ENCODE measurements at regions of chr17 and their contacts with region 1.

Region 1: DNA sequence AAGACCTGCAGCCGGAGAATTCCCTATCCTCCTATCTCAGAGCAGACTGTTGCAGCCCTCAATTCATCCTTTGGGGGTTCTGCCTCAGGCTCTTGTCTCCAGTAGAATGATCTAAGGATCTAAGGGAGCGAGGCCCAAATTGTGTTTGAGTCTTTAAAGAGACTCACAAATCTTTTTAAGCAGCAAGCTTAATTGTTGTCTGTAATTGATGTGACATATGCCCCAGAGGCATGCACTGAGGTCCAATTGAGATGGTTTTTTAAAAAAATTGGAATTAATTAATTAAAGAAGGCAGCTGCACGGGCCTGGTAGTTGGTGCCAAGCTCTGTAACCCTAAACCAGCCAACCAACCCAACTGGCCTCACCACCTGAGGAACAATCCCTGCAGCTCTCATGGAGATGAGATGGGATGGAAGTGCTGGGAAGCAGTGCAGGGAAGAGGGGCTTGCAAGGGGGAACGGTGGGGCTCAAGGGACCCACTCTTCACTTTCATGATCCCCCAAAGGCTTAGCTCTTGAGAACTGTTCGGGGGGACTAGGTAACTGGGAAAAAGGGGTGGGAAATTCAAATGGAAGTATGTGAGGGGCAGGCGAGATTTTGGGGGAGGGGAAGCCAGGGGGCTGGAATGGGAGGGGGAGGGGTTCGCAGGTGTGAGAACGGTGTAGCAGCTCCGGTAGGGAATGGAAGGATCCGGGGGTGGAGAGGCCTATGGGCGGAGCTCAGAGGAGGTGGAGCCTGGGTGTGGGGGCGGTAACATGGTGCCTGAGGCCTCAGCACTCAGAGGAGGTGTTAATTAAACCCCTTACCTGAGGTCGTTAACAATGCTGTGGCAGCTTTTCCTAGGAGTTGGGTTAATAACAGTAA is 9.2 kb upstream of the ZNF652 start:
- DNase-seq: peak in 1 of 2 experiments; percentile 55
- H3K4me3 ChIP-seq: no peak overlapping the region
- H3K4me3 Mint-ChIP-seq: no peak overlapping the region
- H3K27ac Mint-ChIP-seq: no peak overlapping the region
- H3K4me1 ChIP-seq: peaks cover 9% of the 10 kb centered on the region
- H3K4me1 Mint-ChIP-seq: peaks cover 6% of the 10 kb centered on the region
- H3K27me3 ChIP-seq: no peaks in the 10 kb centered on the region
- H3K27me3 Mint-ChIP-seq: no peaks in the 10 kb centered on the region
- CTCF ChIP-seq: no peak

Region 2: GRCh38 chr17:49277638-49278037 is 93.6 kb before region 1 on chr17:
- CTCF ChIA-PET with region 1: no interaction called
- POLR2A ChIA-PET with region 1: interaction called, 10 read pairs
- intact Hi-C with region 1: no loop called
- DNase-seq: peak in 1 of 2 experiments; percentile 30
- H3K4me3 ChIP-seq: no peak overlapping the region
- H3K4me3 Mint-ChIP-seq: no peak overlapping the region
- H3K27ac Mint-ChIP-seq: no peak overlapping the region
- H3K4me1 ChIP-seq: no peaks in the 10 kb centered on the region
- H3K4me1 Mint-ChIP-seq: no peaks in the 10 kb centered on the region
- H3K27me3 ChIP-seq: no peaks in the 10 kb centered on the region
- H3K27me3 Mint-ChIP-seq: no peaks in the 10 kb centered on the region
- CTCF ChIP-seq: no peak

Region 3: DNA sequence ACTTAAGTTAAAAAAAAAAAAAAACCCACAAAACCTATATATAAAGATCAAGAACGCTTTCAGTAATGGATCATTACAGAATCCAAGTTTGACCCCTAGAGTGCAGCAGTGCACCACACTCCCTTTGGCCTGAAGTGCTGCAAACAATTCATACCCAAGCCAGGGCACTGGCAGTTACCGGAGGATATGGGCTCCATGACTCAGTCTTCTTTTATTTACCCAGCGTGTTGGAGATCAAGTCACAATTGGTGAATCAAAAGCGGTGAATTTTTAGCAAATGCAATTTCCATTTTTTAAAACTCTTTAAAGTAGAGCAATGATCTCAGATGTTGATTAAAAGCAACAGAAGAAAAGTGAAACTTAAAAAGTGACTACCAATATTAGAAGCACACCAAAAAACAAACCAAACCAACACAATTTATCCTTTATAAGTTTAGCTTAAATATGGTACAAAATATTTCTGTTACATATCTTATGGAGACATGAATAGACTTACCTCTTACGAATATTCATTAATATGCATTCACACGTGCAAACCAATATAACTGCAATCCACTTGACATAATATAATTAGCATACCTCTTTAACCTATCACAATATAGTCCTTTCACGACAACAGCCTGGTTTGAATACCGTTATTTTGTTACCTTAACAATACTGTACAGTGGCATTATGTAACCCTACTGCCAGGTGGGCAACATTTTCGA is 55.5 kb before region 1 on chr17:
- CTCF ChIA-PET with region 1: interaction called, 11 read pairs
- POLR2A ChIA-PET with region 1: no interaction called
- intact Hi-C with region 1: no loop called
- DNase-seq: peak; percentile 82 to 87
- H3K4me3 ChIP-seq: no peak overlapping the region
- H3K4me3 Mint-ChIP-seq: no peak overlapping the region
- H3K27ac Mint-ChIP-seq: no peak overlapping the region
- H3K4me1 ChIP-seq: no peaks in the 10 kb centered on the region; the same call in 1 of the 2 replicates
- H3K4me1 Mint-ChIP-seq: no peaks in the 10 kb centered on the region
- H3K27me3 ChIP-seq: no peaks in the 10 kb centered on the region
- H3K27me3 Mint-ChIP-seq: no peaks in the 10 kb centered on the region
- CTCF ChIP-seq: peak; percentile 97 to 99

Region 4: GRCh38 chr17:49390548-49391324 is 19.5 kb after region 1 on chr17:
- CTCF ChIA-PET with region 1: interaction called, 3 read pairs
- POLR2A ChIA-PET with region 1: no interaction called
- intact Hi-C with region 1: loop called (anchors 1 kb)
- DNase-seq: no peak
- H3K4me3 ChIP-seq: no peak overlapping the region
- H3K4me3 Mint-ChIP-seq: no peak overlapping the region
- H3K27ac Mint-ChIP-seq: no peak overlapping the region
- H3K4me1 ChIP-seq: peaks cover 9% of the 10 kb centered on the region; the same call in 1 of the 2 replicates
- H3K4me1 Mint-ChIP-seq: no peaks in the 10 kb centered on the region
- H3K27me3 ChIP-seq: no peaks in the 10 kb centered on the region
- H3K27me3 Mint-ChIP-seq: no peaks in the 10 kb centered on the region
- CTCF ChIP-seq: no peak

Region 5: GRCh38 chr17:49548506-49549310 is 177.5 kb after region 1 on chr17:
- CTCF ChIA-PET with region 1: no interaction called
- POLR2A ChIA-PET with region 1: no interaction called
- intact Hi-C with region 1: no loop called
- DNase-seq: peak; percentile 75 to 77
- H3K4me3 ChIP-seq: no peak overlapping the region
- H3K4me3 Mint-ChIP-seq: no peak overlapping the region
- H3K27ac Mint-ChIP-seq: no peak overlapping the region
- H3K4me1 ChIP-seq: peaks cover 5% of the 10 kb centered on the region; the same call in 1 of the 2 replicates
- H3K4me1 Mint-ChIP-seq: peaks cover 9% of the 10 kb centered on the region
- H3K27me3 ChIP-seq: no peaks in the 10 kb centered on the region
- H3K27me3 Mint-ChIP-seq: no peaks in the 10 kb centered on the region
- CTCF ChIP-seq: peak; percentile 82 to 93

Measured in Caco-2 (cell line).